ENCODE measurements at regions of chr17 and their contacts with region 1.

Region 1: DNA sequence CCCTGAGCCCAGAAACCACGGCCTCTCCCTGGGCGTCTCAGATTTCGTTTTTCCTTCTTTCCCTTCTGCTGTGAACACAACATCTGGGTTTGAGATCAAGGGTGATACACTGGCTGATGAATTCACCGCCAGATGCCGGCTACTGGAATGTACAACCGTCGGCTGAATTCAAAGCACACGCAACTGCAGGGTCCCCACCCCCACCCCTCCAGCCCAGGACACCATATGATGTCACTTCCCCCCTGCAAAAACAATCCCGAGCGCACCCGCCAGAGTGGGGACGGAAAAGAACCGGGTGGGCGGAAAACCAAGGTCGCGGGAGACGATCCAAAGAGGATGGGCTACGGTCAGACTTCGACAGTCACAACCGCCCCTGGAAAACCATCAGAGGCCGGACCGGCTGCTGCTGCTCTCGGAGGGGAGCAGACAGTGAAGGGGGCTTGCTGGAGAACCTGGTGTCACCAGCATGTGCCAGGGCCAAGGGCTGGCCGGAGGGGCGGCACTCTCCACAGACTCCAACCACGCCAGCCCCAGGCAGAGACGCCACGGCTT is 23.3 kb downstream of the CEP295NL start:
- DNase-seq: peak; percentile 91
- ATAC-seq: peak; percentile 57

Region 2: GRCh38 chr17:78818932-78819331 is 60.8 kb before region 1 on chr17:
- intact Hi-C with region 1: no loop called
- DNase-seq: no peak
- ATAC-seq: peak; percentile 33

Region 3: DNA sequence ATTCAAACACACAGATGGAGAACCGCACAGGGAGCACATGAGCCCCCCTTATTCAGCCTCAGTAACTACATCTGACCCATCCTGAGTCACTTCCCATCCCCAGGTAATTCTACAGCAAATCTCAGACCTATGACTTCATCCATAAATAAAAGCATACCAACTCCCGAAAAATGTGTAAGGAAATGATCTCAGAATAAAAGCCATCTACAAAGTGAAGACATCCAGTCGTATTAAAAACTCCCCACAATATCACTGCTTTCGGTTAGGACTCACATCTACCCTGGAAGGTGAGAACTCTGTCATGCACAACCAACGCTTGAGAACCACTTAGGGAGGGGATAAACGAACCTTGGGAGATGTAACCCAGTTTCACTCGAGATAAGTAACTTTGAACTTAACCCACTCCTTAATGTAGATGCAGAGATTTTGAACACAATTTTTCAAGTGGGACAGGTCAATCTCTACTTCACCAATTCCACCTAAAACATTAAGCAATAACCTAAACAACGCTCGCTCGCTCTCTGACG is 40.4 kb before region 1 on chr17:
- intact Hi-C with region 1: no loop called
- DNase-seq: no peak
- ATAC-seq: no peak

Region 4: GRCh38 chr17:78903101-78903779 is 23.5 kb after region 1 on chr17 and contains the start of gene CEP295NL:
- intact Hi-C with region 1: no loop called
- DNase-seq: peak; percentile 67
- ATAC-seq: peak; percentile 67
- total RNA-seq, gene CEP295NL: 16.7 TPM

Region 5: GRCh38 chr17:78925234-78925633 is 45.5 kb after region 1 on chr17 and contains the start of gene TIMP2:
- intact Hi-C with region 1: loop called (anchors 10 kb)
- DNase-seq: peak; percentile 97
- ATAC-seq: peak; percentile 58
- total RNA-seq, gene TIMP2: 720 TPM

Measured in sciatic nerve (tissue), 2 donors.